ENCODE measurements at regions of chr15 and their contacts with region 1.

Region 1: DNA sequence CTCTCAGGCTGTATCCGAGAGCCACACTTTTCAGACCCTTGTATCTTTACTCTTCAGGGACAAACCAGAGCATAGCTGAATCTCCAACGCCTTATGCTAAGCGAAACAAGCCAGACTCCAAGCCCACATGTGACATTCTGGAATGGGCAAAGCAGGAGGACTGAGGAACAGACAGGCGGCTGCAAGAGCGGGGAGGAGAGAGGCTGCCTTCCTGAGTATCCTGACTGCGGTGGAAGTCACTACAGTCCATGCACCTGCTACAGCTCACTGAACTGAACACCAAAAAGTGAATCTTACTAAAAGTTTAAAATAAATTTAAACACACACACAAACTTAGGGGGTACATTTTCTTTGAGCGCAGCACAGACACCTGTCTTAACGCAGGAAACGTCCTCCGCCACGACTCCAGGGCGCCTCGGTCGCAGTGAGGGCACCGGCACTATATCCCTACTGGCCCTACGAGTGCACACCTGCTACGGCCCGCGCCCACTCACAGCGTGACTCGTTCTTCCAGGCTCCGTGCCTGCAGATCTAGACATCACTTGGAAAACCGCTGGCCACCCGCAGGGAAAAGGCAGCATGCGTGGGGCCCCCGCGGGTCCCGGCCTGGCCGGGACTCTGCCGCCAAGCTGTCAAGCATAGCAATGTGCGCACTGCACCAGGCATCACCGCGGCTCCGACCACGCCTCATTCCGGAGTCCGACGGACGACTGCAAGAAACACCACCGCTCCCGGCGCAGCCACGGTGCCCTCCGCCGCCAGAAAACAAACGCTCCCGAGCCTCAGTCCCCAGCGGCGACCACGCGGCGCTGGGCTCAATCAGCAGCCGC is 1.3 kb downstream of the CYFIP1 start:
- DNase-seq: peak; percentile 60
- H3K4me3 ChIP-seq: peak overlapping the region; percentile 81
- H3K27ac ChIP-seq: no peak overlapping the region
- H3K4me1 ChIP-seq: no peaks in the 10 kb centered on the region
- H3K27me3 ChIP-seq: no peaks in the 10 kb centered on the region
- CTCF ChIP-seq: no peak

Region 2: DNA sequence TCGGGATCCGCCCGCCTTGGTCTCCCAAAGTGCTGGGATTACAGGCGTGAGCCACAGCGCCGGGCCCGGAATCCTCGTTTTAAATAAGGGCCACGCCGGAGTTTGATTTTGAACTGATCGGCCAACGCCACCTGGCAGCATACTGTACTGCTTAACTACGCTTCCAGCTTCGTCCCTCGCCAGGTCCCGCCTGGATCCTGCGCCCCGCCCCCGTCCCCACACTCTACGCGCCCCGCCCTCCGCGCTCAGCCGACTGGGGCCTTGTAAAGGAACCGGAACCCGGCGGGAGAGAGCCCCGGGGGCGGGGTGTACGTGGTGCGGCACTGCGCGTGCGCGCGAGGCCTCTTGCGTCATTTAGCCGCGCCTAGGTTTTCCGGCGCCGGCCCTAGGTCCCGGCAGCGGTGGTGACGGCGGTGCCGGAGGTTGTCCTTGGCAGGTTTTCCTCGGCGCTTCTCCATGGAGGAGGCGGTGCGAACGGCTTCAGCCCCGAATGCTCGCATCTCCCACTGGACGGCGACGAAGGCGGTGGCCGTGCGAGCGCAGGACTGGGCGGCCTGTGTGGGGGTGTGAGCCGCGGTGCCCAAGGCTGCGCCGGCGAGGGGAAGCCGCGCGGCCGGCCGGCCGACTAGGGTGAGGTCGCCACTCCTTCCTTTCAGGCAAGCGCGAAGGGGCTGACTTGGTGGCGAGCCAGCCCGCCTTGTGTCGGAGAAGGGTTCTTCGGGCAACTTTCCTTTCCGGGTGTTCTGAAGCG is 140.4 kb before region 1 on chr15 and contains the start of gene NIPA2:
- CTCF ChIA-PET with region 1: no interaction called
- POLR2A ChIA-PET with region 1: no interaction called
- intact Hi-C with region 1: loop called (anchors 10 kb)
- DNase-seq: peak; percentile 99
- H3K4me3 ChIP-seq: peak within 1 kb of the TSS; percentile 80
- H3K27ac ChIP-seq: peak within 1 kb of the TSS; percentile 96
- H3K4me1 ChIP-seq: peaks cover 10% of the 10 kb centered on the region
- H3K27me3 ChIP-seq: no peaks in the 10 kb centered on the region
- CTCF ChIP-seq: no peak
- total RNA-seq, gene NIPA2: 78.8 and 87.2 TPM in 2 replicates

Region 3: DNA sequence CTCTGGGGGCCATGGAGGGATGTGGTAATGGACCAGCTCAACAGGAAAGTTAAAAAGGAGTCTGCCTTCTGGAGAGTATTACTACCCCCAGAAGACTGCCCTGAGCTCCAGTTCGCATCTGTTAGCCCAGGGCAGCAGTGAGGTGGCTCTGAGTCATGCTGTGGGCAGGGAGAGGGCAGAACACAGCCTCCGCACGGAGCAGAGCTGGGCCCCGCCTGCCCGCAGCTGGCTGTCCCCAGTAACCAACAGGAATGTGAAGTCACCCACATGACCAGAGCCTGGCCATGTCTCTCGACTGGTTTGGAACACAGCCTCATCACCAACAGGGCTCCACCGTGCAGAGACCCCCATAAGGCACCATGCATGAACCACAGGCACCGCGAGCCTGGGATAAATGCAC is 60.9 kb before region 1 on chr15:
- CTCF ChIA-PET with region 1: no interaction called
- POLR2A ChIA-PET with region 1: no interaction called
- intact Hi-C with region 1: loop called (anchors 10 kb)
- DNase-seq: no peak
- H3K4me3 ChIP-seq: no peak overlapping the region
- H3K27ac ChIP-seq: no peak overlapping the region
- H3K4me1 ChIP-seq: no peaks in the 10 kb centered on the region
- H3K27me3 ChIP-seq: no peaks in the 10 kb centered on the region
- CTCF ChIP-seq: no peak

Region 4: DNA sequence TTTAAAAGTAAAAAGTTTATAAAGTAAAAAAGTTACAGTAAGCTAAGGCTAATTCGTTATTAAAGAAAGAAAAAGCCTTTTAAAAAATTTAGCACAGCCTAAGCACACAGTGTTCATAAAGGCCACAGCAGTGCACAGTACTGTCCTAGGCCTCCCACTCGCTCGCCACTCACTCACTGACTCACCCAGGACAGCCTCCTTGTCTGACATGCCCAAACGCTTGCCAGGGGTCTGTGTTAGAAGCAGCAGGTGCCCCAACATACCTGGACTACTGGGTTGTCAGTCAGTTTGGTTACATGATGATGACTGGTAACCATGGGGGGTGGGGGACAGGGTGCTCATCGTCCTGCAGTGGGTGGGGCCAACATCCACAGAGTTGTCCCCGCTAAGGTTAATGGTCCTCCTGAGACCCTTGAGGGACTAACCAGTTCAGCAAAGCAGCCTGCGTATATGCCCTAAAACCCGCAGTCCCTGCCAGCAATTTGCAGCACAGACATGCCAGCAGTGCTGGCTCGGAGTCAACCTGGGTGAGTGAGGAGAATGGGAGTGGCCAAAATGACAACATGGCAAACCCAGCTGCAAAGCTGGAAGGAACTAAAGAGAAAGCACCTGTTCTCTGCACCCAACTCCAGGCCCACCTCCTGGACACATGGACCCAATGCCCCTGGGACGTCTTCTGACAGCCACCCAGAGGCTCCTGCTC is 48.0 kb before region 1 on chr15:
- CTCF ChIA-PET with region 1: no interaction called
- POLR2A ChIA-PET with region 1: no interaction called
- intact Hi-C with region 1: loop called (anchors 5 kb)
- DNase-seq: peak; percentile 24
- H3K4me3 ChIP-seq: no peak overlapping the region
- H3K27ac ChIP-seq: no peak overlapping the region
- H3K4me1 ChIP-seq: no peaks in the 10 kb centered on the region
- H3K27me3 ChIP-seq: no peaks in the 10 kb centered on the region
- CTCF ChIP-seq: no peak

Region 5: GRCh38 chr15:22952796-22953579 is 25.9 kb before region 1 on chr15:
- CTCF ChIA-PET with region 1: no interaction called
- POLR2A ChIA-PET with region 1: interaction called, 3 read pairs
- intact Hi-C with region 1: loop called (anchors 2 kb)
- DNase-seq: peak; percentile 75
- H3K4me3 ChIP-seq: no peak overlapping the region
- H3K27ac ChIP-seq: peak overlapping the region; percentile 75
- H3K4me1 ChIP-seq: peaks cover 39% of the 10 kb centered on the region
- H3K27me3 ChIP-seq: no peaks in the 10 kb centered on the region
- CTCF ChIP-seq: no peak